ENCODE measurements at regions of chr3 and their contacts with region 1.

Region 1: GRCh38 chr3:46078712-46079400 is 51.6 kb upstream of the XCR1 start:
- DNase-seq: peak; percentile 73 to 96 (median 88)
- ATAC-seq: peak; percentile 100
- H3K4me3 ChIP-seq: no peak overlapping the region
- H3K4me3 Mint-ChIP-seq: no peak overlapping the region
- H3K27ac ChIP-seq: no peak overlapping the region
- H3K27ac Mint-ChIP-seq: no peak overlapping the region
- H3K4me1 ChIP-seq: peaks cover 5% of the 10 kb centered on the region
- H3K4me1 Mint-ChIP-seq: peaks cover 5% of the 10 kb centered on the region
- H3K27me3 ChIP-seq: no peaks in the 10 kb centered on the region
- H3K27me3 Mint-ChIP-seq: no peaks in the 10 kb centered on the region
- CTCF ChIP-seq: peak; percentile 100

Region 2: DNA sequence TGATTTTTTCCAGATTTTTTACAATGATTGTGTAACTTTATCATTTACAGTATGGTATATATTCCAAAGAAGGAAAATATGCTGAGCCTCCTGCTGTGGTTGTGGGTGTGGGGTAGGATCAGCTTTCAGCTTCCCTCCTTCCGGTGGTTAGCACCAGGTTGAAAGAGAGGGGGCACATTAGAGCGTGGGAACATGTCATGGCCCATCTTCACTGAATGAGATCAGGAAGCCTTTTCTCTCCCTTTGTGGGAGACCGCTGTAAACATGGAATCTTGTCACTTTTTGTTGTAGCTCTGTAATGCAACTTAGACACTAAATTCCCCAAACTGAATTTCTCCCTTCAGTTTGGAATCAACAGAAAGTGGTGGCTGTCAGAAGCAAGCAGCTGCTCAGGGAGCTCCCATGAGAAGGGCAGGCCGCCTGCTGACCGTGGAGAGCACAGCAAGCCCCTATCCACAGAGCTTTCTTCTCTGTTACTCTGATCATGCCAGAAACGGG is 571.0 kb before region 1 on chr3:
- CTCF ChIA-PET with region 1: interaction called, 3 read pairs
- POLR2A ChIA-PET with region 1: no interaction called
- intact Hi-C with region 1: loop called (anchors 1 to 5 kb)
- DNase-seq: peak in 1 of 14 experiments; percentile 22
- ATAC-seq: peak; percentile 56
- H3K4me3 ChIP-seq: no peak overlapping the region
- H3K4me3 Mint-ChIP-seq: no peak overlapping the region
- H3K27ac ChIP-seq: no peak overlapping the region
- H3K27ac Mint-ChIP-seq: no peak overlapping the region
- H3K4me1 ChIP-seq: peaks cover 10% of the 10 kb centered on the region
- H3K4me1 Mint-ChIP-seq: peaks cover 15% of the 10 kb centered on the region
- H3K27me3 ChIP-seq: no peaks in the 10 kb centered on the region
- H3K27me3 Mint-ChIP-seq: no peaks in the 10 kb centered on the region
- CTCF ChIP-seq: no peak

Region 3: GRCh38 chr3:45929042-45929679 is 149.7 kb before region 1 on chr3:
- CTCF ChIA-PET with region 1: interaction called, 14 read pairs
- POLR2A ChIA-PET with region 1: interaction called, 3 read pairs
- intact Hi-C with region 1: no loop called
- DNase-seq: peak; percentile 49 to 79 (median 62)
- ATAC-seq: peak; percentile 99
- H3K4me3 ChIP-seq: no peak overlapping the region
- H3K4me3 Mint-ChIP-seq: no peak overlapping the region
- H3K27ac ChIP-seq: no peak overlapping the region
- H3K27ac Mint-ChIP-seq: peak overlapping the region; percentile 30
- H3K4me1 ChIP-seq: peaks cover 7% of the 10 kb centered on the region
- H3K4me1 Mint-ChIP-seq: peaks cover 5% of the 10 kb centered on the region
- H3K27me3 ChIP-seq: no peaks in the 10 kb centered on the region
- H3K27me3 Mint-ChIP-seq: no peaks in the 10 kb centered on the region
- CTCF ChIP-seq: peak; percentile 72

Region 4: DNA sequence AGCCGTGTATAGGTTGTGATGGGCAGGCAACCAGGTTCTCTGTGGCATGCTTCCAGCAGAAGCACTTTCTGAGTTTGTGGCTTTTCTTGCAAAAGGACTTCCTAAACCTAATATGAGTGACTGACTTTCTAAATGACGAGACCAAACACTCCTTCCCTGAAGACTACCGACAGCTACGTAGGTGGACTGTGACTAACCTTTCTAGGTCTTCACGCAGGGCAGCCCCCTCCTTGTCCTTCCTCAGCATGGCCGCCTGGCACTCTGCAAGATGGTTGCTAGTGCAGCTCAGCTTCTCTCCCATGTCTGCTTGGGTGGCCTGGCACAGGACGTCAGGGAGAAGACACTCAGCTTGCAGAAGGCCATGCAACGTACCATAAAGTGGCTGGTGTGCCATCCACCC is 114.7 kb before region 1 on chr3:
- CTCF ChIA-PET with region 1: interaction called, 10 read pairs
- POLR2A ChIA-PET with region 1: no interaction called
- intact Hi-C with region 1: no loop called
- DNase-seq: peak in 3 of 14 experiments; percentile 42 to 49 (median 44)
- ATAC-seq: peak; percentile 61
- H3K4me3 ChIP-seq: no peak overlapping the region
- H3K4me3 Mint-ChIP-seq: no peak overlapping the region
- H3K27ac ChIP-seq: no peak overlapping the region
- H3K27ac Mint-ChIP-seq: peak overlapping the region; percentile 67
- H3K4me1 ChIP-seq: peaks cover 71% of the 10 kb centered on the region
- H3K4me1 Mint-ChIP-seq: peaks cover 28% of the 10 kb centered on the region
- H3K27me3 ChIP-seq: no peaks in the 10 kb centered on the region
- H3K27me3 Mint-ChIP-seq: no peaks in the 10 kb centered on the region
- CTCF ChIP-seq: no peak

Region 5: GRCh38 chr3:46038916-46039315 is 39.9 kb before region 1 on chr3:
- CTCF ChIA-PET with region 1: interaction called, 3 read pairs
- POLR2A ChIA-PET with region 1: no interaction called
- intact Hi-C with region 1: loop called in 1 of 2 experiments (anchors 5 kb)
- DNase-seq: no peak
- ATAC-seq: no peak
- H3K4me3 ChIP-seq: no peak overlapping the region
- H3K4me3 Mint-ChIP-seq: no peak overlapping the region
- H3K27ac ChIP-seq: no peak overlapping the region
- H3K27ac Mint-ChIP-seq: no peak overlapping the region
- H3K4me1 ChIP-seq: no peaks in the 10 kb centered on the region
- H3K4me1 Mint-ChIP-seq: no peaks in the 10 kb centered on the region
- H3K27me3 ChIP-seq: no peaks in the 10 kb centered on the region
- H3K27me3 Mint-ChIP-seq: no peaks in the 10 kb centered on the region
- CTCF ChIP-seq: no peak

Region 6: GRCh38 chr3:46266598-46266997 is 187.7 kb after region 1 on chr3:
- CTCF ChIA-PET with region 1: no interaction called
- POLR2A ChIA-PET with region 1: no interaction called
- intact Hi-C with region 1: no loop called
- DNase-seq: no peak
- ATAC-seq: no peak
- H3K4me3 ChIP-seq: no peak overlapping the region
- H3K4me3 Mint-ChIP-seq: no peak overlapping the region
- H3K27ac ChIP-seq: no peak overlapping the region
- H3K27ac Mint-ChIP-seq: no peak overlapping the region
- H3K4me1 ChIP-seq: peaks cover 25% of the 10 kb centered on the region
- H3K4me1 Mint-ChIP-seq: peaks cover 14% of the 10 kb centered on the region
- H3K27me3 ChIP-seq: no peaks in the 10 kb centered on the region
- H3K27me3 Mint-ChIP-seq: no peaks in the 10 kb centered on the region
- CTCF ChIP-seq: no peak

Region 7: GRCh38 chr3:46368569-46368968 is 289.7 kb after region 1 on chr3:
- CTCF ChIA-PET with region 1: interaction called, 6 read pairs
- POLR2A ChIA-PET with region 1: no interaction called
- intact Hi-C with region 1: loop called in 1 of 2 experiments (anchors 5 kb)
- DNase-seq: peak; percentile 18 to 90 (median 54)
- ATAC-seq: peak; percentile 74
- H3K4me3 ChIP-seq: no peak overlapping the region
- H3K4me3 Mint-ChIP-seq: peak overlapping the region; percentile 2
- H3K27ac ChIP-seq: no peak overlapping the region
- H3K27ac Mint-ChIP-seq: peak overlapping the region; percentile 77
- H3K4me1 ChIP-seq: peaks cover 57% of the 10 kb centered on the region
- H3K4me1 Mint-ChIP-seq: peaks cover 40% of the 10 kb centered on the region
- H3K27me3 ChIP-seq: no peaks in the 10 kb centered on the region
- H3K27me3 Mint-ChIP-seq: no peaks in the 10 kb centered on the region
- CTCF ChIP-seq: no peak